ENCODE measurements at regions of chrX and their contacts with region 1.

Region 1: GRCh38 chrX:110002300-110003166 is at the start of gene TMEM164:
- DNase-seq: peak; percentile 72 to 78
- ATAC-seq: peak; percentile 71 to 76
- H3K4me3 ChIP-seq: peak within 1 kb of the TSS; percentile 63 to 72 (median 71)
- H3K27ac ChIP-seq: peak within 1 kb of the TSS; percentile 88 to 92 (median 91)
- H3K4me1 ChIP-seq: peaks cover 17 to 18% of the 10 kb centered on the region in 2 donors
- H3K27me3 ChIP-seq: no peaks in the 10 kb centered on the region
- CTCF ChIP-seq: peak in 2 of 5 experiments; percentile 17 to 38
- POLR2A ChIP-seq: peak; percentile 46 to 63
- total RNA-seq, gene TMEM164: 40.1 to 61.2 (median 47.3) TPM

Region 2: GRCh38 chrX:108362026-108362425 is 1640.5 kb before region 1 on chrX:
- in situ Hi-C with region 1: no loop called
- intact Hi-C with region 1: no loop called
- DNase-seq: no peak
- ATAC-seq: no peak
- H3K4me3 ChIP-seq: no peak overlapping the region
- H3K27ac ChIP-seq: no peak overlapping the region
- H3K4me1 ChIP-seq: no peaks in the 10 kb centered on the region
- H3K27me3 ChIP-seq: no peaks in the 10 kb centered on the region
- CTCF ChIP-seq: no peak
- POLR2A ChIP-seq: no peak

Region 3: GRCh38 chrX:109927663-109928273 is 74.8 kb before region 1 on chrX:
- in situ Hi-C with region 1: no loop called
- intact Hi-C with region 1: loop called (anchors 2 kb)
- DNase-seq: peak; percentile 48 to 64
- ATAC-seq: peak; percentile 94
- H3K4me3 ChIP-seq: no peak overlapping the region
- H3K27ac ChIP-seq: peak overlapping the region; percentile 88 to 91 (median 90)
- H3K4me1 ChIP-seq: peaks cover 21 to 31% of the 10 kb centered on the region in 2 donors
- H3K27me3 ChIP-seq: no peaks in the 10 kb centered on the region
- CTCF ChIP-seq: no peak
- POLR2A ChIP-seq: peak in 1 of 2 donors; percentile 16

Region 4: DNA sequence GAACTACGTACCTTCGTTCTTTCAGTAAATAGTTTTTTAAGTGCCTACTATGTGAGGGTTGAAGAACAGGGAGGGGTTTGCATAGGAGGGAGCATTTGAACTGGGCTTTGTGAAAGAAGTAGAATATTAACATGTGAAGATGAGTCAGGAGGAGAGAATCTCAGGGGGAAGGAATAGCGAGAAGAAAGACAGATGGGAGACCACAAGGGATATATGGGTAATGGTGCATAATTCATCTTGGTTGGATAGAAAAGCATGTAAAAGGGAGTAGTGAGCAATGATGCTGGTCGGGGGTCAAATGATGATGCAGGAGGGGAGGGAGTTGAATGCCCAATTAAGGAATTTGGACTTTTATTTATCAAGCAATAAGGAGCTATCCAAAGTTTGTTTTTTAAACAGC is 53.1 kb after region 1 on chrX:
- in situ Hi-C with region 1: no loop called
- intact Hi-C with region 1: loop called (anchors 5 kb)
- DNase-seq: no peak
- ATAC-seq: no peak
- H3K4me3 ChIP-seq: no peak overlapping the region
- H3K27ac ChIP-seq: peak overlapping the region; percentile 78 to 86 (median 80)
- H3K4me1 ChIP-seq: peaks cover 16 to 26% of the 10 kb centered on the region in 2 donors
- H3K27me3 ChIP-seq: no peaks in the 10 kb centered on the region
- CTCF ChIP-seq: no peak
- POLR2A ChIP-seq: no peak

Region 5: GRCh38 chrX:110146521-110146920 is 144.0 kb after region 1 on chrX:
- in situ Hi-C with region 1: no loop called
- intact Hi-C with region 1: loop called (anchors 5 kb)
- DNase-seq: no peak
- ATAC-seq: peak; percentile 60 to 68
- H3K4me3 ChIP-seq: no peak overlapping the region
- H3K27ac ChIP-seq: peak overlapping the region; percentile 40 to 77 (median 74)
- H3K4me1 ChIP-seq: peaks cover 25 to 36% of the 10 kb centered on the region in 2 donors
- H3K27me3 ChIP-seq: no peaks in the 10 kb centered on the region
- CTCF ChIP-seq: peak in 4 of 5 experiments; percentile 60 to 68 (median 66)
- POLR2A ChIP-seq: no peak

Region 6: DNA sequence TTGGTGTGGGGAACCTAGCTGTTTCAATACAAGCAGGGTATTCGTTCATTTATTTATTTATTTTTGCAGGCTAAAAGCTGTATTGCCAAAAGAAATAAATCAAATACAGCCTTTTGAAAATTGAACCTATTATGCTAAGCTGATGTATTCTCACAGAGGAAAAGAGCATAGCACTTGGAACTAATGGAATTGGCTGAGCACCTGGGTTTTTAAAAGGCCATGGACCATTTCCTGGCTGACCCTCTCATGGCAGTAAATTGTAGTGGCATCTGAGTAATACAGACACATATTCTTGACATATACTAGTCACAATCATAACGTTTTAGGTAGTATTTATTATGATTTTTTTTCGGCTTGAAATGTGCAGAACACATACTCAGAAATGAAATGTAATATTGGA is 1606.7 kb after region 1 on chrX:
- in situ Hi-C with region 1: no loop called
- intact Hi-C with region 1: no loop called
- DNase-seq: no peak
- ATAC-seq: no peak
- H3K4me3 ChIP-seq: no peak overlapping the region
- H3K27ac ChIP-seq: no peak overlapping the region
- H3K4me1 ChIP-seq: no peaks in the 10 kb centered on the region
- H3K27me3 ChIP-seq: no peaks in the 10 kb centered on the region
- CTCF ChIP-seq: no peak
- POLR2A ChIP-seq: no peak